ENCODE measurements at regions of chr14 and their contacts with region 1.

Region 1: GRCh38 chr14:80996049-80996901 is 40.9 kb downstream of the TSHR start:
- DNase-seq: peak; percentile 38 to 47 (median 44)
- H3K4me3 ChIP-seq: no peak overlapping the region
- H3K4me3 Mint-ChIP-seq: no peak overlapping the region
- H3K27ac ChIP-seq: no peak overlapping the region
- H3K27ac Mint-ChIP-seq: peak overlapping the region in 1 of 7 donors; percentile 0
- H3K4me1 ChIP-seq: no peaks in the 10 kb centered on the region
- H3K4me1 Mint-ChIP-seq: peaks cover 3 to 9% (median 6%) of the 10 kb centered on the region in 4 donors
- H3K27me3 ChIP-seq: no peaks in the 10 kb centered on the region
- H3K27me3 Mint-ChIP-seq: peaks cover 14 to 15% of the 10 kb centered on the region in 2 donors

Region 2: DNA sequence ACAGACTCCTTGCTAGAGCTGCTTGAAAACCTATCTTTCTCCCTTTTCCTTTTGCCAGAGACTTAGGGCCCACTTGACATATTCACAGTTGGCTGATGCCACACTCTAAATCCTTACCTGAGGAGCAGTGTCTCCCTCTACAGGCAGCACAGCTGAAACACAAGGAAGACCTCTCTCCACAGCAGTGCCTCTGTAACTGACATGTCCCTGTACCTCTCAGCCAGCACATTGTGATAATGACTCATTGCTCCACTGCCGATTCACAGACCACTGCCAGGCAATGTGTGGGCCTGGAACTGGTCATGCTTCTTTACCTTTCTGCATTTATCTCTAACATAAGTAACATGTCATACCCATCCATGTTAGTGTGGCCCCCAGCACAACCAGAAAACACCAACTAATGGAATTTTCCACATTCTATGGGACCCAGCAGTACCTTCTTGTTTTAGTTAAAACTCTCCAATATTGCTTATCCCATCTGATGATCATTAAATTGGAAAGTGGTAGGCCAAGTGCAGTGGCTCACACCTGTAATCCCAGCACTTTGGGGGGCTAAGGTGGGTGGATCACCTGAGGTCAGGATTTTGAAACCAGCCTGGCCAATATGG is 168.0 kb after region 1 on chr14:
- CTCF ChIA-PET with region 1: interaction called, 47 read pairs
- POLR2A ChIA-PET with region 1: no interaction called
- intact Hi-C with region 1: no loop called
- DNase-seq: peak; percentile 16 to 46 (median 26)
- H3K4me3 ChIP-seq: no peak overlapping the region
- H3K4me3 Mint-ChIP-seq: no peak overlapping the region
- H3K27ac ChIP-seq: no peak overlapping the region
- H3K27ac Mint-ChIP-seq: no peak overlapping the region
- H3K4me1 ChIP-seq: peaks cover 4% of the 10 kb centered on the region
- H3K4me1 Mint-ChIP-seq: peaks cover 5 to 16% (median 7%) of the 10 kb centered on the region in 4 donors
- H3K27me3 ChIP-seq: no peaks in the 10 kb centered on the region
- H3K27me3 Mint-ChIP-seq: no peaks in the 10 kb centered on the region

Region 3: GRCh38 chr14:81211844-81212243 is 215.6 kb after region 1 on chr14:
- CTCF ChIA-PET with region 1: interaction called, 20 read pairs
- POLR2A ChIA-PET with region 1: no interaction called
- intact Hi-C with region 1: loop called (anchors 1 kb)
- DNase-seq: peak; percentile 20 to 48 (median 26)
- H3K4me3 ChIP-seq: no peak overlapping the region
- H3K4me3 Mint-ChIP-seq: no peak overlapping the region
- H3K27ac ChIP-seq: no peak overlapping the region
- H3K27ac Mint-ChIP-seq: peak overlapping the region in 3 of 7 donors; percentile 20 to 49 (median 37)
- H3K4me1 ChIP-seq: peaks cover 23% of the 10 kb centered on the region
- H3K4me1 Mint-ChIP-seq: peaks cover 35 to 69% (median 44%) of the 10 kb centered on the region in 4 donors
- H3K27me3 ChIP-seq: no peaks in the 10 kb centered on the region
- H3K27me3 Mint-ChIP-seq: no peaks in the 10 kb centered on the region

Measured in CD4-positive, alpha-beta memory T cell (primary cell).